A673 (cell line): ENCODE measurements at regions of chr17 and their contacts with region 1.

Region 1: DNA sequence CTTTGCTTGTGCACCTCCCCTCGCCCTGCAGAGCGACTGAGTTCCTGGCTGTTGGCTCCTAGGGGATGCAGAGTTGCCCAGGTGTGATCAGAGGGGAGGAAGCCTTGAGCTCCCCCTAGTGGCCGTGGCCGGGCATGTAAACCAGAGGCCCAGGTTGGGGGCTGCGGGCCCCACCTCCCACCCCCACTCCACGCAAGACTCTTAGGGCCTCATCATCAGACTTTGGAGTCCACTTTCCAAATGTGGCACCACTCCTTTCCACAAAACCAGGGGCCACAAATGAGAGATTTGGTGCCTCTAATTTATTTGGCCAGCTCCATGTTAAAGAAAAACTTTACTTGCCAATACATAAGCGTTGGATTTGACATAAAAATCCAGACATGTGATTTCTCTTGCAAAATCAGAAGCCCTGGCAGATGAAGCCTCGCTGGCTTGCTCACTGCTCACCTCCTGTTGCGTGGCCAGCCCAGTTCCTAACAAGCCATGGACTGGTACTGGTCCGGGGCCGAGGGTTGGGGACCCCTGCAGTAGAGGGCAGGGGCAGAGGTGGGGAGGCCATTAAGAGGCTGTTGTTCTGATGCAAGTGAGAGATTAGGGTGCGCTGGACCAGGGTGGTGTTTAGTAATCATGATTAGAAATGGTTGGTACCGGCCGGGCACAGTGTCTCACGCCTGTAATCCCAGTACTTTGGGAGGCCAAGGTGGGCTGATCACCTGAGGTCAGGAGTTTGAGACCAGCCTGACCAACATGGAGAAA is 28.7 kb upstream of the GAS7 start:
- DNase-seq: peak; percentile 44
- H3K4me3 ChIP-seq: no peak overlapping the region
- H3K27ac ChIP-seq: no peak overlapping the region
- H3K4me1 ChIP-seq: no peaks in the 10 kb centered on the region
- H3K27me3 ChIP-seq: no peaks in the 10 kb centered on the region
- CTCF ChIP-seq: peak; percentile 96

Region 2: DNA sequence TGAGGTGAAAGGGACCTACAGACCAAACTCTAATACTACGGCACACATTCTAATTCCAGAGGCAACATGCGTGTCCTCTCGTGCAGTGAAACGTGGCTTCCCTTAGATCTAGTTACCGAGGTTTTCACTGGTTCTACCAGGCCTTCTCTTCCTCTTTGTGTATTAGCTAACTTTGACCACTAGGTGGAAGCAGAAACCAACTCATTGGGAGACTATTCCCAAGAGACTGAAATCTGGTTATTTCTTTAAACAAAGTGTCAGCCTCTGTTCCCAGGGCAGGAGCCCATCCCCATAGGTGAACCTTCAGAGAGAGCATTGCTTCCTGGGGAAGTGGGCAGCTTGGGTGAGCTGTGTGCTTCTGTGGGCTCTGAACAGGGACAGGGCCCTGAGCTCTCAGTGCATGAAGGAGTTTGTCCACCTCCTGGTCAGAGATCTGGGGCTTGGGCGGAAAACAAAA is 302.3 kb before region 1 on chr17:
- CTCF ChIA-PET with region 1: no interaction called
- POLR2A ChIA-PET with region 1: no interaction called
- intact Hi-C with region 1: loop called (anchors 2 kb)
- DNase-seq: peak; percentile 85
- H3K4me3 ChIP-seq: no peak overlapping the region
- H3K27ac ChIP-seq: no peak overlapping the region
- H3K4me1 ChIP-seq: no peaks in the 10 kb centered on the region
- H3K27me3 ChIP-seq: no peaks in the 10 kb centered on the region
- CTCF ChIP-seq: peak; percentile 83

Region 3: GRCh38 chr17:9968902-9969617 is 258.0 kb before region 1 on chr17:
- CTCF ChIA-PET with region 1: interaction called, 3 read pairs
- POLR2A ChIA-PET with region 1: no interaction called
- intact Hi-C with region 1: loop called (anchors 1 kb)
- DNase-seq: no peak
- H3K4me3 ChIP-seq: no peak overlapping the region
- H3K27ac ChIP-seq: no peak overlapping the region
- H3K4me1 ChIP-seq: no peaks in the 10 kb centered on the region
- H3K27me3 ChIP-seq: no peaks in the 10 kb centered on the region
- CTCF ChIP-seq: no peak